ENCODE measurements at regions of chr11 and their contacts with region 1.

Region 1: DNA sequence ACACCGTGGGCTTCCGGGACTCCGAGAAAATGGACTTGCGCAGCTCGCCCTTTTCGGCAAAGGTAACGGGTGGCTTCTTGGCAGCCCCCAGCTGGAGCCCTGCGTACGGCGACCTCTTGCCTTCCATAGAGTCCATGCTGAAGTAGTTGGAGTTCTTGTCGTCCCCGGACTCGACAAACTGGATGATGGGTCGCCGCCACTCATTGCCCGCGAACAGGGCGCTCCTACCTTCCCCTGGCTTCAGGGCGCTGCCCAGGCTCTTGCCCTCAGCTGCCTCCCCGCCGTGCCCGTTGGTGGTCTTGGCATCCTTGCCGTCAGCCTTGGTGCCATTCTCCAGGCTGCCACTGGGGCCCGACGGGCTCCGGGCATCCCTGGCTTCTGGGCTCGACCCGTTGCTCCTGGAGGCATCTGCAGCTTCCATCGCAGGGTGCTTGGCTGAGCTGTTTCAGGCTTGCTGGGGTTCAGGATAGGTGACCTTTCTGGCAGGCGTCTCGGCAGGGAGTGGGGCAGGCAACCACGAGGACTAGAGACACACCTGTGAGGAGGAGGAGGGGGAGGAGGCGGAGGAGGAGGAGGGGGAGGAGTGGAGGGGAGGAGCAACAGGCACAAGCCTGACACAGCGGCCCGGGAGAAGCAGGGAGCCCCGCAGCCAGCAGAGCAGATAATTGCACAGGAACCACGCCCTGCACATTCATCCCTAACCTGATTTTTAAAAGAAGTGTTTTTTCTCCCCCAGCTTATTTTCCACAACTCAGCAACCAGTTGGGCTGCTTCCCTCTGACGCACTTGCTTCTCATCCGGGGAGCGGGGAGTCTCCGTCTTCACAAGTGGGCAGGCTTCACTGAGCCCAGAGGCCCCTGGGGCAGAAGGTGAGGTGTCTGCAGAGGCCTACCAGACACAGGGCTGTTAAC is at the start of gene TRIM29:
- DNase-seq: peak; percentile 87
- H3K27ac ChIP-seq: peak within 1 kb of the TSS; percentile 99
- CTCF ChIP-seq: peak; percentile 49

Region 2: DNA sequence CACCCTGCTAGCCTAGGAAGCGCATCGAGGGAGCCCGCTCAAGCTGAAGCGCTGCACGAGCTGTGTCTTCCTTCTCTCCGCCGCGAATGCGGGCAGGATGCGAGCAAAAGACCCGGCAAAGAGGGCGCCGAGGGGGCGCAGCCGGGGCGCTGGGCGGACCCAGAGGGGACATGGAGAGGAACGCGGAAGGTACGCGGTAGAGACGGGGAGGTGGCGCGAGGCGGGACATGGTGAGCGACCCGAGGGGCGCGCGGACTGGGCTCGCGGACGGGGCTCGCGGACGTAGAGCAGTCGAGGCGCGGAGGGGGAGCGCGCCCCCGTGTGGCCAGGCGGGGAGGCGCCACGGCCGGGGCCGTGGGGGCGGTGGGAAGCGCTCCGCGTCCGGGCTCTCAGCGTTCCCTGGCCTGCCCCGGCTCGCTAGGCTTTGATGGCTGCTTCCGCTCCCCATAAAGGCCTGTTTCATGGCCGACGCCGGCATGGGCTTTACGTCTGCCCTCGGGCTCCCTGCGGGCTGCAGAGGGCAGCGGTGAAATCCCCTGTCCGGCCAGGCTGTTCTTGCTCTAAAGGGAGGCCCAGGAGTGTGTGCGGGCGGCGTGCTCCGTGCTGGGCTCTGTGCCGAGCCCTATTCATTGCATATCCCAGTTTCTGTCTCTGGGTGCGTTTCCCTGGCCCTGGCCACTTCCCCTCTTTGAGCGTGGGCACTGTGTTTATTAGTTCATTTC is 31.3 kb after region 1 on chr11:
- CTCF ChIA-PET with region 1: interaction called, 32 read pairs
- POLR2A ChIA-PET with region 1: no interaction called
- DNase-seq: peak; percentile 78
- H3K27ac ChIP-seq: peak overlapping the region; percentile 70
- CTCF ChIP-seq: peak; percentile 93